A549 (cell line): ENCODE measurements at regions of chr10 and their contacts with region 1.

Region 1: GRCh38 chr10:102450194-102450938 is 977 bp downstream of the C10orf95 start:
- DNase-seq: peak; percentile 74 to 79
- ATAC-seq: peak; percentile 78 to 79
- H3K4me3 ChIP-seq: peak overlapping the region; percentile 97
- H3K27ac ChIP-seq: peak overlapping the region; percentile 89 to 95
- H3K4me1 ChIP-seq: peaks cover 44% of the 10 kb centered on the region
- CTCF ChIP-seq: no peak
- EP300 ChIP-seq: no peak
- POLR2A ChIP-seq: peak; percentile 75
- RAD21 ChIP-seq: no peak

Region 2: DNA sequence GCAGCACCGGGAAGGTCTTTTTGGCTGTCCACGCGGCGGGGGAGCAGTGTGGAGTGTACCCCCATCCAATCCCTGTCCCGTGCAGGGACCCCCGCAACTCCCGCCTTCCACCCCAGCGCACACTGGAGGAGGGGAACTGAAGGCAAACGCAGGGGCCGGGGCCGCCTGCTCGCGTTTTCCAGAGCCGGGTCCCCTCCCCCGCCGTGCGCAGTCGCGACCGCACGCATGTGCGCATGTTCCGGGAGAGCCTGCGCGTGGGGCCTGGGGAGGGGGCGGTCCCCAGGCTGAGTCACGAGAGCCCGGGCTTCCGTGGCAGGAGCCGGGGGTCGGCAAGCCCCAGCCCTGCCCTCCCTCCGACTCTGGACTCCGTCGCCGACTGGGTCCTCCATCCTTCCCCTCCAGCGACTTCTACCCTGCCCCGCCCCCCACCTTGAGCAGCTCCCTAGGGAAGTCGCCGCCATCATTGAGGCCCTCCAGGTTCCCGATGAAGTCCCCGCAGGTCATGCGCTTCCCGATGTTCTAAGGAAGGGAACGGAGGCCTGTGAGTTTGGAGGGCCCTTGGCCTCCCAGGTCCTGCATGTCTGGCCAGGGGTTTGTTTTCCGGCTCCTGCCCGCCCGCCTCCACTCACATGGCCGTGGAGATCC is 39.8 kb before region 1 on chr10:
- CTCF ChIA-PET with region 1: no interaction called
- POLR2A ChIA-PET with region 1: no interaction called
- DNase-seq: no peak
- ATAC-seq: no peak
- H3K4me3 ChIP-seq: peak overlapping the region; percentile 28; the same call in 2 of the 3 replicates
- H3K27ac ChIP-seq: peak overlapping the region in 1 of 2 experiments; percentile 58; a peak in 2 of 6 replicates
- H3K4me1 ChIP-seq: peaks cover 3% of the 10 kb centered on the region; the same call in 1 of the 3 replicates
- CTCF ChIP-seq: no peak
- EP300 ChIP-seq: no peak
- POLR2A ChIP-seq: no peak
- RAD21 ChIP-seq: no peak

Region 3: DNA sequence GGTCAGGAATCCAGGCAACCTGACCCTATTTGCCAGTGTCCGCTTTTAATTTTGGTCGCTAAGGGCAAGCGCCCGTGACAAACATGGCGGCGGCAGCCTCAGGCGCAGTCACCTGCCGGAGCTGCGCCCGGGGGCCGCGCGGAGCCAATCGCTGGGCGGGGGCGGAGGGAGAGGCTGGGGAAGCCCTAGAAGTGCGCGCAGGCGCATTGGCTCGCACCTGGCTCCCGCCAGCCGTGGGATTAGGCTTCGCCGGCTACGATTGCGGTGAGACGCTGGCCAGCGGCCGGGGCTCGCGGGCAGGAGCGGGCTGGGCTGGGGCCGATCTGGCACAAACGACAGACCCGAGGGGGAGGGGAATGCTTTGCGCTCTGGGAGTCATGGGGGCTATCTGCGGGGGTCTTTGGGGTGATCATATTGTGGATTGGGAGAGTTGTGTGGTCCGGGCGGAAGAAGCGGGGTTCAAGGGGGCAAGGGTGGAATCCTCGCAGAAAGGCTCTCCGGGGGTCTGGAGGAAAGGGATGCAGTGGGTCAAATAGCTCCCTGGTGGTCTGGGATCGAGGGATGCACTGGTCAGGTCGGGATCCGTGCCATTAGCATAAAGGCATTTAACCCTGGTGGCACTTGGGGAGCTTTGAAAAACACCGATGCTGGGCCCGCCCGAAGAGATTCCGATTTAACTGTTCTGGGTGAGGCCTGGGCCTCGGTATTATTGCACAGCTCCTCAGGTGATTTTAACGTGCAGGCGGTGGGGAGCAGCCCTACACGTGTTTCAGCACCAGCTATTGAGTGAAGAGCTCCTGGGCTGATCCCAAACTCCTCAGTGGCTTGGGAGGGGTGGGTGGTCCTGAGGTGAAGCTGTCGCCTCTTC is 11.1 kb after region 1 on chr10:
- CTCF ChIA-PET with region 1: interaction called, 11 read pairs
- POLR2A ChIA-PET with region 1: interaction called, 9 read pairs
- DNase-seq: peak; percentile 87 to 98
- ATAC-seq: peak; percentile 90 to 97
- H3K4me3 ChIP-seq: peak overlapping the region; percentile 58
- H3K27ac ChIP-seq: peak overlapping the region; percentile 77 to 84
- H3K4me1 ChIP-seq: peaks cover 12% of the 10 kb centered on the region
- CTCF ChIP-seq: no peak
- EP300 ChIP-seq: no peak
- POLR2A ChIP-seq: peak; percentile 67
- RAD21 ChIP-seq: no peak

Region 4: DNA sequence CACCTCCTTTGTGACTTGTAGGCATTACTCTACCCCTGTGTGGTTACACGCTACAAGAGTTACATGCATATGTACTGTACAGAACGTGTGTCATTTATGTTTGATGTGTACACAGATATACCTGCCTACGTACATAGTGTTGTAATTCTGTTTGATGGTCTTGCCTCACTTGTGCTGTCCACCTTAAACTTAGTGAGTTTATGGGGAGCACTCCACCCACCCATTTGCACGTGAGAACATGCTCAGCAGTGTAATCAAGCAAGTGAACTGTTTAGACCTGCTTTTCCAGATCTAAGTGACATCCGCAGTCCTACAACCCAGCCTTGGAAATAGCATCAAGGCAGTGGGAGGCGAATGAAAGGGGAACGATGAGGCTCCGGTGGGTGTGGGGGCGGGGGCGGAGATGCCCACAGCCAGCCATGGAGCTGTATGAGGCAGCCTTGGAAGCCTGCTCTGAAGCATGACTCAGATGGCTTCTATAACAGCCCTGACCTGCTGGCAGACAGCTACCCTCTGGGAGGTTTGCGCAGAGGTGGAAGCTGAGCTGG is 105.5 kb after region 1 on chr10:
- CTCF ChIA-PET with region 1: no interaction called
- POLR2A ChIA-PET with region 1: no interaction called
- DNase-seq: no peak
- ATAC-seq: peak in 1 of 2 experiments; percentile 51; a peak in 2 of 6 replicates
- H3K4me3 ChIP-seq: no peak overlapping the region
- H3K27ac ChIP-seq: no peak overlapping the region
- H3K4me1 ChIP-seq: no peaks in the 10 kb centered on the region
- CTCF ChIP-seq: no peak
- EP300 ChIP-seq: no peak
- POLR2A ChIP-seq: no peak
- RAD21 ChIP-seq: no peak

Region 5: GRCh38 chr10:102660888-102661657 is 210.7 kb after region 1 on chr10:
- CTCF ChIA-PET with region 1: no interaction called
- POLR2A ChIA-PET with region 1: no interaction called
- DNase-seq: no peak
- ATAC-seq: peak; percentile 22 to 35; a peak in 4 of 6 replicates
- H3K4me3 ChIP-seq: no peak overlapping the region
- H3K27ac ChIP-seq: 0 out of 6 replicates have a peak overlapping the region, but pooled peaks of 1 of the 2 experiments have one; percentile 17
- H3K4me1 ChIP-seq: peaks cover 17% of the 10 kb centered on the region
- CTCF ChIP-seq: no peak
- EP300 ChIP-seq: no peak
- POLR2A ChIP-seq: no peak
- RAD21 ChIP-seq: no peak